ENCODE measurements at regions of chr4 and their contacts with region 1.

Region 1: GRCh38 chr4:83449009-83449408 is 6.6 kb downstream of the HELQ start:
- DNase-seq: no peak
- ATAC-seq: no peak

Region 2: GRCh38 chr4:83438719-83439118 is 10.3 kb before region 1 on chr4:
- intact Hi-C with region 1: loop called in 1 of 2 experiments (anchors 1 kb)
- DNase-seq: no peak
- ATAC-seq: no peak

Region 3: DNA sequence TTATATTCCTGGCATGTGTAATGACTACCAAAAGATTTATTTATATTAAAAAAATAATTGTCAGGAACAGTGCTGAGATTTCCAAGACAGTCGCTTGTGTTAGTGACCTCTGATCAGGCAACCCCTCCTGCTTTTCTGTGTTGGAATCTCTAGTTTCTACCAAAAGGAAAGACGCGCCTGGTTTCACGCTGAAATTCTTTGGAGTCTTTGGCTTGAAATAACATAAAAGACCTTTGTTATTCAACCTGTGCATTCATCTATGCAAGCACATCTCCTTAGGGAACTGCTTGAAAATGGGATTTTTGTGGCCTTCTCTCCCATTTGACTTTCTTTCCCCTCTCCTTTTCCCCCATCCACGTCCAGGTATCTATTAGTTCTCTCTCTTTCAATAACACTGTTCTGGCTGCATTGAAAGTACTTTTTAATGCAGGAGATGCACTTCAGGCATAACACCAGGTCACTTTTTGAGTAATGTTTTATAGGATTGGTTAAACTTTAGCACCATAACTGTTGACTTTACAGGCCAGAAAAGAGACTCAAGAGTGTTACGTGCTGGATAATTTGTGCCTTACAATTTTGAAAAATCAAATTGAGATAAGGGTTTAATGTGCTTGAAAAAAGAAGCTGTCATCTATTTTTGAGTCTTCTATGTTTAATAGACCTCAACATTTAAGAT is 259.6 kb after region 1 on chr4:
- intact Hi-C with region 1: no loop called
- DNase-seq: no peak
- ATAC-seq: no peak

Region 4: GRCh38 chr4:84482564-84483563 is 1033.9 kb after region 1 on chr4:
- intact Hi-C with region 1: no loop called
- DNase-seq: no peak
- ATAC-seq: peak in 1 of 2 donors; percentile 36